Mammary epithelial cell (primary cell): ENCODE measurements at regions of chr15 and their contacts with region 1.

Region 1: DNA sequence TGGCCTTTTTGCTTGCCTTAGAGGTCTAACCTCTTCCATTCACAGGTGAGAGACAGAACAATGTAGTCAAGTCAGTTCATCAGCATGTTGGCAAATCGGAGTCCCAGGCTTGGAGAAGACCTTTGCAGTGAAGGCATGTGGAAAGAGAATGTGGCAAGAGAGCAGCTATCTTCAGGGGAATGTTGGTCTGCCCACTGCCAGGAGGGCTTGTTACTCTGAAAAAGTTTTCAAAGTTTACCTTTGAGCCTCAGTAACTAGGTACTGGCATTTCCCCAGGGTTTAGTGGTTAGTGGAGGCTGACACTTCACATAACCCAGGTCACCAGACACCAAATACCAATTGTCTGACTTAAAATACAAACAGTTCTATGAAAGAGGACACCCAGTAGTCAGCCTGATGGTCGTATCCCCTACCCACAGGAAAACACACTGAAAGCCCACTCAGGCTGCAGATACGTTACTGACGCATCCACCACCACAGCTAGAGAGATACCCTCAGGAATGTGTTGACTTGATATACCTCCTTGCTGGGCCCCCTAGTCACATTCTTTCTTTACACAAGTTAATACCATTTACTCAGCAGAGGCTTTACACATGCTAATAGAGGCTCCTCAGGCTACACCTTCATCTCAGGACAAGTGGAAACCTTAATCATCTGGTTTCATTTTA is 9.7 kb upstream of the ARID3B start:
- DNase-seq: peak; percentile 94
- H3K4me3 ChIP-seq: no peak overlapping the region
- H3K27ac ChIP-seq: peak overlapping the region; percentile 87
- H3K4me1 ChIP-seq: peaks cover 51% of the 10 kb centered on the region
- H3K27me3 ChIP-seq: no peaks in the 10 kb centered on the region
- CTCF ChIP-seq: no peak

Region 2: DNA sequence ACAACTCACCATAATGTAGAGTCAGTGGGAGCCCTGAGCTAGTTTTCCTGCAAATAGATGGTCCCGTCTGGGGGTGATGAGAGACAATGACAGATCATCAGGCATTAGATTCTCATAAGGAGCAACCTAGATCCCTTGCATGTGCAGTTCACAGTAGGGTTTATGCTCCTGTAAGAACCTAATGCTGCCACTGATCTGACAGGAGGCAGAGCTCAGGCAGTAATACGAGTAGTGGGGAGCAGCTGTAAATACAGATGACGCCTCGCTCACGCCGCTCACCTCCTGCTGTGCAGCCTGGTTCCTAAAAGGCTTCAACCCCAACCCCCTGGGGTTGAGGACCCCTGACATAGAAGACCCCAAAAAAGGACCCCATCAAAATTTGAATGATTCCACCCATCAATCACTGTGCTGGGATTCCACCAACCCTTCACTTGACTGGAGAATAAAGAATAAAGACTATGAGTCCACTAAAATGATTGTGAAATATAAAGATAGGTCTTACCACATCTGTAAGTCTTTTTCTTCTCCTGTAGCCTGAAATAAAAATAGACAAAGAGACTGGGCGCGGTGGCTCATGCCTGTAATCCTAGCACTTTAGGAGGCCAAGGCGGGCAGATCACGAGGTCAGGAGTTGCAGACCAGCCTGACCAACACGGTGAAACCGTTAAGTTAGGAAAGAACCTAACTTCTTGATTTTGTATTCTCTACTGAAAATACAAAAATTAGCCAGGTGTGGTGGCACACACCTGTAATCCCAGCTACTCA is 60.5 kb before region 1 on chr15:
- CTCF ChIA-PET with region 1: interaction called, 12 read pairs
- dilution Hi-C with region 1: no loop called
- in situ Hi-C with region 1: no loop called
- intact Hi-C with region 1: no loop called
- DNase-seq: no peak
- H3K4me3 ChIP-seq: no peak overlapping the region
- H3K27ac ChIP-seq: no peak overlapping the region
- H3K4me1 ChIP-seq: no peaks in the 10 kb centered on the region
- H3K27me3 ChIP-seq: no peaks in the 10 kb centered on the region
- CTCF ChIP-seq: no peak

Region 3: GRCh38 chr15:74573987-74574386 is 42.7 kb after region 1 on chr15:
- CTCF ChIA-PET with region 1: no interaction called
- dilution Hi-C with region 1: loop called (anchors 5 kb)
- in situ Hi-C with region 1: no loop called
- intact Hi-C with region 1: no loop called
- DNase-seq: peak; percentile 30
- H3K4me3 ChIP-seq: no peak overlapping the region
- H3K27ac ChIP-seq: no peak overlapping the region
- H3K4me1 ChIP-seq: no peaks in the 10 kb centered on the region
- H3K27me3 ChIP-seq: no peaks in the 10 kb centered on the region
- CTCF ChIP-seq: no peak